Posterior cingulate gyrus (tissue), 11 donors: ENCODE measurements at regions of chr11 and their contacts with region 1.

Region 1: GRCh38 chr11:18731949-18732821 is 6.2 kb upstream of the IGSF22 start:
- DNase-seq: peak; percentile 48 to 95 (median 84)

Region 2: GRCh38 chr11:18115360-18116127 is 616.6 kb before region 1 on chr11:
- intact Hi-C with region 1: loop called (anchors 10 kb)
- DNase-seq: peak in 8 of 10 donors; percentile 28 to 93 (median 65)

Region 3: GRCh38 chr11:18540207-18541009 is 191.8 kb before region 1 on chr11:
- intact Hi-C with region 1: loop called (anchors 2 kb)
- DNase-seq: no peak